Common myeloid progenitor, CD34-positive (primary cell): ENCODE measurements at regions of chr20 and their contacts with region 1.

Region 1: GRCh38 chr20:31934968-31935764 is 16.7 kb downstream of the PDRG1 start:
- DNase-seq: peak; percentile 26 to 42 (median 41)
- H3K4me3 ChIP-seq: no peak overlapping the region
- H3K27ac ChIP-seq: no peak overlapping the region
- H3K4me1 ChIP-seq: no peaks in the 10 kb centered on the region
- H3K27me3 ChIP-seq: no peaks in the 10 kb centered on the region

Region 2: GRCh38 chr20:31920102-31920855 is 14.9 kb before region 1 on chr20:
- CTCF ChIA-PET with region 1: interaction called, 16 read pairs
- POLR2A ChIA-PET with region 1: interaction called, 3 read pairs
- DNase-seq: no peak
- H3K4me3 ChIP-seq: no peak overlapping the region
- H3K27ac ChIP-seq: no peak overlapping the region
- H3K4me1 ChIP-seq: peaks cover 0 to 27% (median 15%) of the 10 kb centered on the region in 4 experiments
- H3K27me3 ChIP-seq: no peaks in the 10 kb centered on the region